ENCODE measurements at regions of chr15 and their contacts with region 1.

Region 1: GRCh38 chr15:60916679-60917460 is 312.2 kb downstream of the RORA start:
- DNase-seq: peak; percentile 86
- H3K4me3 Mint-ChIP-seq: no peak overlapping the region
- H3K27ac Mint-ChIP-seq: no peak overlapping the region
- H3K4me1 Mint-ChIP-seq: peaks cover 15% of the 10 kb centered on the region
- H3K27me3 Mint-ChIP-seq: peaks cover 6% of the 10 kb centered on the region

Region 2: GRCh38 chr15:60507596-60508424 is 409.1 kb before region 1 on chr15:
- CTCF ChIA-PET with region 1: interaction called, 30 read pairs
- POLR2A ChIA-PET with region 1: no interaction called
- DNase-seq: peak; percentile 61
- H3K4me3 Mint-ChIP-seq: peak overlapping the region; percentile 18
- H3K27ac Mint-ChIP-seq: peak overlapping the region; percentile 67
- H3K4me1 Mint-ChIP-seq: peaks cover 55% of the 10 kb centered on the region
- H3K27me3 Mint-ChIP-seq: no peaks in the 10 kb centered on the region

Region 3: GRCh38 chr15:60585743-60586708 is 330.8 kb before region 1 on chr15:
- CTCF ChIA-PET with region 1: interaction called, 81 read pairs
- POLR2A ChIA-PET with region 1: interaction called, 27 read pairs
- DNase-seq: peak; percentile 66
- H3K4me3 Mint-ChIP-seq: peak overlapping the region; percentile 69
- H3K27ac Mint-ChIP-seq: peak overlapping the region; percentile 96
- H3K4me1 Mint-ChIP-seq: peaks cover 87% of the 10 kb centered on the region
- H3K27me3 Mint-ChIP-seq: no peaks in the 10 kb centered on the region

Region 4: DNA sequence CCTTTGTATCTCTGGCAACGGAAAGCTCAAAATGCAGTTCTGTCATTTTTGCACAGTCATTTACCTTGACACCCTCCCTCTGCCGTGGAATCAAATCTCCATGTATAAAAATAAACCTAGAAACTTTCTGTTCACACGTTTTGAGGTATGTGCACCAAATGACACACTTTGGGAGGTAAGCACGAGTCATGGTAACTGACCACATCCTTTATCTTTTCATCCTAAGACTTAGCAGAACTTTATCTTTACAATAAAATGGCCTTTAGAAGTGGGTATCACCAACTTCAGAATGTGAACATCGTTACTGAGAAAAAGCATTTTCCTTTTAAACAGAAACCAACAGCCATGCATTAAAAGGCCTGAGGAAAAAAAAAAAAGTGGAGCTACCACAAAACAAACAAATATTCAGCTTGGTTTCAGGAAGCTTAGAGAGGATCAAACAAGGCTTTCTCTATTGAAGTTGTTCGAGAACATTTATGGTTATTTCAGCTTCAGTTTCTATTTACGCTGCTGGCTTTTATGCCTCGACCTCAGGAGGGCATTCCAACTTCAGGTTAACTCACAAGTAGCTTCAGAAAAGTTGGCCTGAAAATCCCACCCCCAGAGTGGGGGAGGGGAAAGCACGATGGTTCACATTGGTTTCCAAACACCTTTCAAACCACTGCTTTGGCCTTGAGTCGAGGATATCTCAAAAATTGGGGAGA is 266.9 kb before region 1 on chr15:
- CTCF ChIA-PET with region 1: interaction called, 10 read pairs
- POLR2A ChIA-PET with region 1: interaction called, 5 read pairs
- DNase-seq: peak; percentile 39
- H3K4me3 Mint-ChIP-seq: peak overlapping the region; percentile 42
- H3K27ac Mint-ChIP-seq: peak overlapping the region; percentile 70
- H3K4me1 Mint-ChIP-seq: peaks cover 38% of the 10 kb centered on the region
- H3K27me3 Mint-ChIP-seq: peaks cover 1% of the 10 kb centered on the region

Region 5: DNA sequence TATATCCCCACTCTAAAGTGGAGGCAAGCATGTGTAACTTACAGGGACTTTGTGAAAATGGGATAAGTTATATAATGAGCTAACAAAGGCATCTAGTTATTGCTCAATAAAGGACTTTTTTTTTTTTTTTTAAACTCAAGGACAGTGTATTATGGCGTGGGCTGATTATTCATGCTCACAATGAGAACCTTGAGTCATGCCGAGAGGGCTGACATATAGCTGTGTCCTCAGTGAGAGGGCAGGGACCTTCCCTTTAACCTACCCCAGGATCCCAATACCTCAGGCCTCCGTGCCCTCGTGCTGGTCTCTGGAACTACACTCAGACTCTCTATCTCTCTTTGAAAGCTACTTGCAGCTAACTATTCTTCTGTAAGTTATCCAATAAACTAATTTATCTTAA is 118.0 kb before region 1 on chr15:
- CTCF ChIA-PET with region 1: no interaction called
- POLR2A ChIA-PET with region 1: no interaction called
- DNase-seq: no peak
- H3K4me3 Mint-ChIP-seq: no peak overlapping the region
- H3K27ac Mint-ChIP-seq: no peak overlapping the region
- H3K4me1 Mint-ChIP-seq: peaks cover 45% of the 10 kb centered on the region
- H3K27me3 Mint-ChIP-seq: peaks cover 3% of the 10 kb centered on the region

Region 6: DNA sequence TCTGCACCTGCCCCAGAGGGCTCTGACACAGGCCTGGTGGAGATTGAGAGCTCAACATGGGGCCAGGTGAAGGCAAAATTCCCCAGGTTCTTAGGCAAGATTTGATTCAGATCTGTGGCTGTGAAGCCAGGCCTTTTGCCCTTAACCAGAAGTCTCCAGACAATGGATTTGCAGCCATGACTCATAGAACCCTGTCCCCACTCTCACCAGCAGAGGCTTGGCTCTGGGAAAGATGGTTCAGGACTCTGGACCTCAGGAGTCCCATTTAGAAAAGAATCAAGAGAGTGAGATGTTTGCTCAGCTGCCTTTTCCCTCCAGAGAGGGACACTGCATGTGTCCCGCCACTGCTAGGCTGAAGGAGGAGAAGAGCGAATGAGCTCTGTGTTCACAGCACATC is 76.6 kb before region 1 on chr15:
- CTCF ChIA-PET with region 1: interaction called, 10 read pairs
- POLR2A ChIA-PET with region 1: interaction called, 6 read pairs
- DNase-seq: no peak
- H3K4me3 Mint-ChIP-seq: peak overlapping the region; percentile 53
- H3K27ac Mint-ChIP-seq: peak overlapping the region; percentile 84
- H3K4me1 Mint-ChIP-seq: peaks cover 56% of the 10 kb centered on the region
- H3K27me3 Mint-ChIP-seq: peaks cover 63% of the 10 kb centered on the region

Region 7: GRCh38 chr15:60905587-60905986 is 11.3 kb before region 1 on chr15:
- CTCF ChIA-PET with region 1: interaction called, 30 read pairs
- POLR2A ChIA-PET with region 1: no interaction called
- DNase-seq: peak; percentile 26
- H3K4me3 Mint-ChIP-seq: no peak overlapping the region
- H3K27ac Mint-ChIP-seq: no peak overlapping the region
- H3K4me1 Mint-ChIP-seq: peaks cover 13% of the 10 kb centered on the region
- H3K27me3 Mint-ChIP-seq: peaks cover 16% of the 10 kb centered on the region

Region 8: DNA sequence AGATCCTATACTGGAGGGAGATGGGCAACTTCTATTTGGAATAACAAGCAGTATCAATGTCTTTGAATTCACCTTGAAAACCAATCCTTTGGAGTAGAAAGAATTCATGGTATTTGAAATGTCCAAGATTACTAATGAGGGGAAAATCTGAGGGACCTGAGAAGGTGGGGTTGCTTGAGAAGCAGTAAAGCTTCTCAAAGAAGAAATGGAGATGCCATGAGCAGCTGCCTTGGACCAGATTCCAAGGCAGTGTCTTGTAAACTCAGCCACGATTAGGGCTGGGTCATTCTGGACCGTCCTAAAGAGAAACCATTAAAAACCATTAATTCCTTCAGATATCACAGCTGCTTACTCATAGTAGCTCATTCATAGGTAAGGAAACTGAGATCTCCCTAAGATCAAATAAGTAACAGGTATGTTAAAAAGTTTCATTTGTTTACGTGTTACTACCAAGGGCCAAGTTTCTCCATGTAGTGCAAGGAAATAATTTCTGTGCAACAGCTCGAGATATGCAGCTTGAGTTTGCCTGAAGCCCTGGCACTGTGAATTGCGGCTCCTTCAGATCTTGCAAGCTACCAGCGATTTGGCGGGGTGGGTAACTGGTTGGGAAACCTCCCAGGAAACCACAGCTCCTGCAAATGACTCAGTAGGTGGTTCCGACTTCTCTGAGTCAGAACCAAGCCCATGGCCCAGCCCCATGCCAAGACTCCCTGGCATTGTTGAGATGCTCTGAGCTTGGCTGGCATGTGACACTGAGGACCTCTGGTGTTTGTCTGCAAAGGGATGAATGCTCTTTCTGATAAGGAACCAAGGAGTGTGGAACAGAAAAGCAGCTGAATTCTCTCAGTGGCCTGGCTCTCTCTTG is 15.4 kb after region 1 on chr15:
- CTCF ChIA-PET with region 1: interaction called, 49 read pairs
- POLR2A ChIA-PET with region 1: interaction called, 5 read pairs
- DNase-seq: peak; percentile 74
- H3K4me3 Mint-ChIP-seq: no peak overlapping the region
- H3K27ac Mint-ChIP-seq: no peak overlapping the region
- H3K4me1 Mint-ChIP-seq: peaks cover 26% of the 10 kb centered on the region
- H3K27me3 Mint-ChIP-seq: peaks cover 53% of the 10 kb centered on the region

Region 9: GRCh38 chr15:60964527-60964926 is 47.7 kb after region 1 on chr15:
- CTCF ChIA-PET with region 1: no interaction called
- POLR2A ChIA-PET with region 1: no interaction called
- DNase-seq: no peak
- H3K4me3 Mint-ChIP-seq: no peak overlapping the region
- H3K27ac Mint-ChIP-seq: no peak overlapping the region
- H3K4me1 Mint-ChIP-seq: no peaks in the 10 kb centered on the region
- H3K27me3 Mint-ChIP-seq: peaks cover 13% of the 10 kb centered on the region

Region 10: GRCh38 chr15:61256219-61256618 is 339.3 kb after region 1 on chr15:
- CTCF ChIA-PET with region 1: no interaction called
- POLR2A ChIA-PET with region 1: no interaction called
- DNase-seq: no peak
- H3K4me3 Mint-ChIP-seq: no peak overlapping the region
- H3K27ac Mint-ChIP-seq: no peak overlapping the region
- H3K4me1 Mint-ChIP-seq: no peaks in the 10 kb centered on the region
- H3K27me3 Mint-ChIP-seq: peaks cover 3% of the 10 kb centered on the region

Measured in activated CD4-positive, alpha-beta memory T cell treated with anti-CD3 and anti-CD28 coated beads, Interleukin-2, amount 10 ng/mL, durations not matched to agents 7 days and 5 days (primary cell).